ENCODE measurements at regions of chr22 and their contacts with region 1.

Region 1: GRCh38 chr22:38872172-38872830 is at the start of gene CBX6:
- DNase-seq: peak; percentile 91 to 96 (median 94)
- H3K4me3 ChIP-seq: peak within 1 kb of the TSS; percentile 71 to 72
- H3K4me3 Mint-ChIP-seq: peak within 1 kb of the TSS; percentile 93 to 96 (median 94)
- H3K27ac ChIP-seq: peak within 1 kb of the TSS; percentile 76
- H3K27ac Mint-ChIP-seq: peak within 1 kb of the TSS; percentile 90 to 97 (median 94)
- H3K4me1 ChIP-seq: peaks cover 53% of the 10 kb centered on the region
- H3K4me1 Mint-ChIP-seq: peaks cover 34 to 62% (median 45%) of the 10 kb centered on the region in 4 donors
- H3K27me3 ChIP-seq: no peaks in the 10 kb centered on the region
- H3K27me3 Mint-ChIP-seq: no peaks in the 10 kb centered on the region
- total RNA-seq, gene CBX6: 85.0 to 88.0 TPM

Region 2: GRCh38 chr22:38766076-38766777 is 106.1 kb before region 1 on chr22:
- CTCF ChIA-PET with region 1: interaction called, 25 read pairs
- POLR2A ChIA-PET with region 1: interaction called, 9 read pairs
- intact Hi-C with region 1: no loop called
- DNase-seq: peak in 4 of 5 donors; percentile 32 to 43 (median 38)
- H3K4me3 ChIP-seq: no peak overlapping the region
- H3K4me3 Mint-ChIP-seq: no peak overlapping the region
- H3K27ac ChIP-seq: no peak overlapping the region
- H3K27ac Mint-ChIP-seq: peak overlapping the region in 1 of 7 donors; percentile 68
- H3K4me1 ChIP-seq: peaks cover 13% of the 10 kb centered on the region
- H3K4me1 Mint-ChIP-seq: peaks cover 3 to 18% (median 12%) of the 10 kb centered on the region in 4 donors
- H3K27me3 ChIP-seq: no peaks in the 10 kb centered on the region
- H3K27me3 Mint-ChIP-seq: no peaks in the 10 kb centered on the region

Region 3: DNA sequence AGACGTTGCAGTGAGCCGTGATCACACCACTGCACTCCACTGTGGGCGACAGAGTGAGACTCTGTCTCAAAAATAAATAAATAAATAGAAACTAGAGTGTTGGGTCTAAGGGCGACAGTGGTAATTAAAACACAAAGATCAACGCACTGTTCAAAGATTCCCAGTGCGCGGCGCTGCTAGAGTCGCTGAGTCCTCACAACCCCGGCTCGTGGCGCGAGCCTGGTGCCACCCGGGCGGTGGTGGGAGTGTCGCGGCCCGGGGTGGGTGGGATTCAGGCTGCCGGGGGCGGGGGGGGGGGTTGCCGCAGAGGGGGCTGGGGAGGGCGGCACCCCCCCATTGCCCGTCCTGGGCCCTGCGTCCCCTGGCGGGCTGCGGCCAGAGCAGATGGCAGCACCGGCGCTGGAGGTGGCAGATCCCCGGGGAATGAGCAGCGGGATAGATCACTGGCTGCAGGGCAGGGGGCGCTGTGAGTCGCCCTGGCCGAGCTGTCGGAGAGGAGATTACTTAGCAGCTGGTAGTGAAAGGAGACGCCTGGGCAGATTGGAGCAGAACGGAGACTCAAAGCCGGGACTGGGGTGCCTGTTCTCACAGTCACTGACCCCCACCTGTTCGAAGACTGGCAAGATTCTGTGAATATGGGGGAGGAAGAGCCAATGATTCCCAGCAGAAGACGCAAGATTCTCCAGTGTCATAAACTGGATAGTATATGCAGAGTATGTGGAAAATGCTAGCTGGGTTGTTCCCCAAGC is 54.9 kb after region 1 on chr22:
- CTCF ChIA-PET with region 1: interaction called, 21 read pairs
- POLR2A ChIA-PET with region 1: no interaction called
- intact Hi-C with region 1: loop called (anchors 2 kb)
- DNase-seq: peak in 3 of 5 donors; percentile 5 to 27 (median 12)
- H3K4me3 ChIP-seq: no peak overlapping the region
- H3K4me3 Mint-ChIP-seq: peak overlapping the region in 7 of 8 donors; percentile 48 to 83 (median 69)
- H3K27ac ChIP-seq: no peak overlapping the region
- H3K27ac Mint-ChIP-seq: no peak overlapping the region
- H3K4me1 ChIP-seq: no peaks in the 10 kb centered on the region
- H3K4me1 Mint-ChIP-seq: peaks cover 3 to 5% (median 4%) of the 10 kb centered on the region in 4 donors
- H3K27me3 ChIP-seq: no peaks in the 10 kb centered on the region
- H3K27me3 Mint-ChIP-seq: peaks cover 17 to 23% of the 10 kb centered on the region in 2 donors

Region 4: GRCh38 chr22:39003165-39003638 is 130.9 kb after region 1 on chr22:
- CTCF ChIA-PET with region 1: interaction called, 168 read pairs
- POLR2A ChIA-PET with region 1: interaction called, 32 read pairs
- intact Hi-C with region 1: loop called (anchors 1 kb)
- DNase-seq: peak; percentile 75 to 82 (median 76)
- H3K4me3 ChIP-seq: no peak overlapping the region
- H3K4me3 Mint-ChIP-seq: peak overlapping the region in 2 of 8 donors; percentile 5 to 8
- H3K27ac ChIP-seq: no peak overlapping the region
- H3K27ac Mint-ChIP-seq: peak overlapping the region; percentile 15 to 84 (median 60)
- H3K4me1 ChIP-seq: peaks cover 16% of the 10 kb centered on the region
- H3K4me1 Mint-ChIP-seq: peaks cover 8 to 14% (median 13%) of the 10 kb centered on the region in 4 donors
- H3K27me3 ChIP-seq: no peaks in the 10 kb centered on the region
- H3K27me3 Mint-ChIP-seq: no peaks in the 10 kb centered on the region

Region 5: DNA sequence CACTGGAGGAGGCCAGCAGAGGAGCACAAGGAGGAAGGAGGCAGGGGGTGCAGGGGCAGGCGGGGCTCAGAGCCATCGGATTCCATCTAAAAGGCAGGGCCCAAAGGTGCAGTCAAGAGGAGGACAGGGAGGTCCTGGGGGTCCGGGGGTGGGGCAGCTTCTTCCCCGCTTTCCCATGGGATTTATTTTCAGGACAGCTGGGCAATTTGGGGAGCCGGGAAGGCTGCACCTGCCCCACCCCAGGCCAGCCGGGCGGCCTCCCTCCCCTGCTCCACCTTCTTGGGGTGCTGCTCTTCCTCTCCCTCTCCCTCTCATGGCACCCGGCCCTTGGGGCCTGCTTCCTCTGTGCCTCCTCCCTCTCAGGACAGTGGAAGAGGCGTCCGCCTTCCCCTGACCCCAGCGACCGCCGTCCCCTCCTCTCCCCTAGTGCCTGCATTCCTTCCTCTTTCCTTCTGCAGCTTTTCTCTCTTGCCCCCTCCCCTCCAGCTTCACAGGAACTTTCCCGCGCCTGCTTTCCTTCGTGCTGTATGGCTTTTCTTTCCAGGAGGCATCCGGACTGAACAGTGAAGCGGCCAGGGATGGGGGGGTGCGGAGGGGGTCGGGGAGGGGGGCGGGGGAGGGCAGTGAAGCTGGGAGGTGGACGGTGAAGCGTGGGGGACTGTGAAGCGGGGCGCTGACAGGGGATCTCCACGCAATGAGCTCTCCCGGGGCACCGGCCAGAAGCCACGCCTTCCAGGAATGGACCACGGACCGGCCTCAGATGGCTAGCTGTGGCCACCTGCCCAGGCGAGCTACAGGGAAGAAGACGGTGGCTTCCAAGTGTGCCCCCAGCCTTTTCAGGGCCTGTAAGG is 251.7 kb after region 1 on chr22:
- CTCF ChIA-PET with region 1: interaction called, 15 read pairs
- POLR2A ChIA-PET with region 1: interaction called, 3 read pairs
- intact Hi-C with region 1: loop called (anchors 1 kb)
- DNase-seq: no peak
- H3K4me3 ChIP-seq: no peak overlapping the region
- H3K4me3 Mint-ChIP-seq: no peak overlapping the region
- H3K27ac ChIP-seq: no peak overlapping the region
- H3K27ac Mint-ChIP-seq: no peak overlapping the region
- H3K4me1 ChIP-seq: peaks cover 4% of the 10 kb centered on the region
- H3K4me1 Mint-ChIP-seq: peaks cover 4 to 14% (median 11%) of the 10 kb centered on the region in 4 donors
- H3K27me3 ChIP-seq: no peaks in the 10 kb centered on the region
- H3K27me3 Mint-ChIP-seq: no peaks in the 10 kb centered on the region